Activated CD4-positive, alpha-beta T cell treated with anti-CD3 and anti-CD28 coated beads, Interleukin-2, amount 10 ng/mL, durations not matched to agents 24 days and 14 days (primary cell): ENCODE measurements at regions of chr3 and their contacts with region 1.

Region 1: GRCh38 chr3:19348929-19349564 is 200.7 kb downstream of the KCNH8 start:
- DNase-seq: peak; percentile 64
- H3K4me3 Mint-ChIP-seq: no peak overlapping the region
- H3K27ac Mint-ChIP-seq: no peak overlapping the region
- H3K4me1 Mint-ChIP-seq: peaks cover 2% of the 10 kb centered on the region
- H3K27me3 Mint-ChIP-seq: peaks cover 9% of the 10 kb centered on the region

Region 2: GRCh38 chr3:19229086-19229485 is 120.0 kb before region 1 on chr3:
- intact Hi-C with region 1: no loop called
- DNase-seq: no peak
- H3K4me3 Mint-ChIP-seq: no peak overlapping the region
- H3K27ac Mint-ChIP-seq: no peak overlapping the region
- H3K4me1 Mint-ChIP-seq: no peaks in the 10 kb centered on the region
- H3K27me3 Mint-ChIP-seq: peaks cover 2% of the 10 kb centered on the region

Region 3: DNA sequence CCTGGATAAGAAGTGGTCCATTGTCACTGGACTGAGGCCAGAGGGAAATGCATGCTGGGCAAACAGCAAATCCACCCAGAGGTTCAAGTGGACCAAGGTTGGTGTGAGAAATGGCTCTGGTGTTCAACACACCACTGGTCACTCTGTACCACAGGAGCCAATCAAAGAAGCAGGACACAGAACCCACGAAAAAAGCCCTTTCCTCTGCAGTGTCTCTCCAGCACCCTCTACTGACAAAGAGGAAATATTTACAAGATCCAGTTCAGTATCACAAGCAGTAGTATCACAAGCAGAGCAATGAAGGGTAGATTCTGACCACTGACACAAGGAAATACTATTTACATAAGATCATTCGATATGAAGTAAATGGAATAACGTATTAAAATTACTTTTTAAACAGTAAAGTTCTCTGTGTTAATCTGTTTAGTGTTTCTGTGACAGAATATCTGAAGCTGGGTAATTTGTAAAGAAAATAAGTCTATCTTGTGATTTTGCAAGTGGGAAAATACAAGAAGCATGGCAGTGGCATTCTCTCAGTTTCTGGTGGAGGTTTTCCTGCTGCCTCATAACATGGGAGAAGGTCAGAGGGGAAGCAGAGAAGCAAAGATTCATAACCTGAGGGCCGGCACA is 194.3 kb after region 1 on chr3:
- intact Hi-C with region 1: loop called (anchors 1 kb)
- DNase-seq: no peak
- H3K4me3 Mint-ChIP-seq: no peak overlapping the region
- H3K27ac Mint-ChIP-seq: no peak overlapping the region
- H3K4me1 Mint-ChIP-seq: no peaks in the 10 kb centered on the region
- H3K27me3 Mint-ChIP-seq: no peaks in the 10 kb centered on the region

Region 4: GRCh38 chr3:19866751-19867347 is 517.8 kb after region 1 on chr3:
- intact Hi-C with region 1: loop called (anchors 2 kb)
- DNase-seq: peak; percentile 81
- H3K4me3 Mint-ChIP-seq: no peak overlapping the region
- H3K27ac Mint-ChIP-seq: no peak overlapping the region
- H3K4me1 Mint-ChIP-seq: no peaks in the 10 kb centered on the region
- H3K27me3 Mint-ChIP-seq: peaks cover 15% of the 10 kb centered on the region